CD8-positive, alpha-beta memory T cell (primary cell): ENCODE measurements at regions of chr7 and their contacts with region 1.

Region 1: DNA sequence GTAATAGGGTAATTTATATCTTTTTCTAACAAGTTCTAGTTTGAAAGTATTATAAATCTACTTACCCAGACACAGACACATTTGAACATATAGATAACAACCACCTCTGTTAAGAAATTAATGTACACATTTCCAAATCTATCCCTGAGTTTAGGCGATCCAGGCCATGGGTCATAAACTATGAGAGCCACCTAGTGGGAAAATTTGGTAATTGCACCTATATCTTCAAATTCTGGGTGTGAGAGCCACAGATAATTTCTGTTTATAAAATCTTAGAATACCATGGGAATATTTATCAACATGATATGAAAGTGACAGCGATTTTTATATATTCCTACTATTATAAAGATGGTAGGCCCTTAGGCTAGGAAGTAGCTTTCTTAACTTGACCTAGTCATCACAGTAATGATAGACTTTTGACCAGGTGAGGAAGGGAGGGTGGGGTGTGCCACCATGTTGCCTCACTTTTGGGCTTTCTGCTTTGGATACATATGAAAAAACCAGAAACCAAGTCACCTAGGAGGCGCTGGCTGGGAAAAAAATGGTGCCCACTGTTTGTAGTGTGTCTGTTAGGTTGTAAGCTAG is 8.0 kb upstream of the EPHA1 start:
- DNase-seq: peak in 2 of 5 donors; percentile 49 to 56
- H3K4me3 ChIP-seq: no peak overlapping the region
- H3K4me3 Mint-ChIP-seq: no peak overlapping the region
- H3K27ac ChIP-seq: no peak overlapping the region
- H3K27ac Mint-ChIP-seq: no peak overlapping the region
- H3K4me1 ChIP-seq: no peaks in the 10 kb centered on the region
- H3K4me1 Mint-ChIP-seq: peaks cover 0 to 5% (median 4%) of the 10 kb centered on the region in 3 donors
- H3K27me3 ChIP-seq: no peaks in the 10 kb centered on the region
- H3K27me3 Mint-ChIP-seq: peaks cover 13 to 18% of the 10 kb centered on the region in 2 donors

Region 2: DNA sequence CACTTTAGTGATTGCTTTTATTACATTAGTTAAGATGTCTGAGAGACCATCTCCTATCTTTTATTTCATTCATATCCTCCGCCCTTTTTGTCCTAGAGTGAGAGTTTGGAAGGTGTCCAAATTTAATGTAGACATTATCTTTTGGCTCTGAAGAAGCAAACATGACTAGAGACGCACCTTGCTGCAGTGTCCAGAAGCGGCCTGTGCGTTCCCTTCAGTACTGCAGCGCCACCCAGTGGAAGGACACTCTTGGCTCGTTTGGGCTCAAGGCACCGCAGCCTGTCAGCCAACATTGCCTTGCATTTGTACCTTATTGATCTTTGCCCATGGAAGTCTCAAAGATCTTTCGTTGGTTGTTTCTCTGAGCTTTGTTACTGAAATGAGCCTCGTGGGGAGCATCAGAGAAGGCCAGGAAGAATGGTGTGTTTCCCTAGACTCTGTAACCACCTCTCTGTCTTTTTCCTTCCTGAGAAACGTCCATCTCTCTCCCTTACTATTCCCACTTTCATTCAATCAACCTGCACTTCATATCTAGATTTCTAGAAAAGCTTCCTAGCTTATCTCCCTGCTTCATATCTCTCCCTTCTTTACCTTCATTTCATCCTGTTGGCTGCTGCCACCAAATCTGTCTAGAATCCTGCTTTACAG is 111.1 kb before region 1 on chr7:
- CTCF ChIA-PET with region 1: interaction called, 26 read pairs
- POLR2A ChIA-PET with region 1: no interaction called
- DNase-seq: peak; percentile 40 to 73 (median 44)
- H3K4me3 ChIP-seq: no peak overlapping the region
- H3K4me3 Mint-ChIP-seq: peak overlapping the region in 1 of 7 donors; percentile 6
- H3K27ac ChIP-seq: no peak overlapping the region
- H3K27ac Mint-ChIP-seq: peak overlapping the region in 6 of 8 donors; percentile 1 to 84 (median 38)
- H3K4me1 ChIP-seq: peaks cover 6% of the 10 kb centered on the region
- H3K4me1 Mint-ChIP-seq: peaks cover 25 to 50% (median 33%) of the 10 kb centered on the region in 3 donors
- H3K27me3 ChIP-seq: no peaks in the 10 kb centered on the region
- H3K27me3 Mint-ChIP-seq: no peaks in the 10 kb centered on the region

Region 3: DNA sequence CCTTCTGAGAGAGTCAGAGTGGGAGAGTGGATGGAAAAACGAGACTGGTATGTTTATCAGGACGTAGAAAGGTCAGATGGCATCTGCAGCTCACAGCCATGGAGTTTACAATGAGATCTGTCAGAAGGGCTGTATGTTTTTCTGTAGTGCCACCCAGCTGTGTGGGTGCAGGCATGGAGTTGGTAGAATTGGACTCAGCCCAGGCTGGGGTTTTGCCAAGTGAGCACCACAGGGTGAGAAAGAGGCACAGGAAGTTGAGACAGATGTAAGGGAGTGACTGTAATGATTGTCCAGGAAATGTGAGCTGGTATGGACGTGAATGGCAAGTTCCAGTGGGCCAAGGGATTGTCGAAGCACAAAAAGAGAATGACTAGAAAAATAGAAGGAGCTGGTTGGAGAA is 44.6 kb before region 1 on chr7:
- CTCF ChIA-PET with region 1: interaction called, 10 read pairs
- POLR2A ChIA-PET with region 1: interaction called, 6 read pairs
- DNase-seq: peak in 4 of 5 donors; percentile 19 to 76 (median 50)
- H3K4me3 ChIP-seq: no peak overlapping the region
- H3K4me3 Mint-ChIP-seq: peak overlapping the region in 6 of 7 donors; percentile 5 to 76 (median 41)
- H3K27ac ChIP-seq: no peak overlapping the region
- H3K27ac Mint-ChIP-seq: peak overlapping the region; percentile 15 to 93 (median 87)
- H3K4me1 ChIP-seq: peaks cover 39% of the 10 kb centered on the region
- H3K4me1 Mint-ChIP-seq: peaks cover 56 to 60% (median 58%) of the 10 kb centered on the region in 3 donors
- H3K27me3 ChIP-seq: no peaks in the 10 kb centered on the region
- H3K27me3 Mint-ChIP-seq: no peaks in the 10 kb centered on the region

Region 4: GRCh38 chr7:143391462-143392404 is 24.9 kb before region 1 on chr7:
- CTCF ChIA-PET with region 1: no interaction called
- POLR2A ChIA-PET with region 1: no interaction called
- DNase-seq: no peak
- H3K4me3 ChIP-seq: no peak overlapping the region
- H3K4me3 Mint-ChIP-seq: no peak overlapping the region
- H3K27ac ChIP-seq: no peak overlapping the region
- H3K27ac Mint-ChIP-seq: peak overlapping the region in 4 of 8 donors; percentile 15 to 84 (median 23)
- H3K4me1 ChIP-seq: peaks cover 5% of the 10 kb centered on the region
- H3K4me1 Mint-ChIP-seq: peaks cover 17 to 36% (median 22%) of the 10 kb centered on the region in 3 donors
- H3K27me3 ChIP-seq: no peaks in the 10 kb centered on the region
- H3K27me3 Mint-ChIP-seq: no peaks in the 10 kb centered on the region

Region 5: DNA sequence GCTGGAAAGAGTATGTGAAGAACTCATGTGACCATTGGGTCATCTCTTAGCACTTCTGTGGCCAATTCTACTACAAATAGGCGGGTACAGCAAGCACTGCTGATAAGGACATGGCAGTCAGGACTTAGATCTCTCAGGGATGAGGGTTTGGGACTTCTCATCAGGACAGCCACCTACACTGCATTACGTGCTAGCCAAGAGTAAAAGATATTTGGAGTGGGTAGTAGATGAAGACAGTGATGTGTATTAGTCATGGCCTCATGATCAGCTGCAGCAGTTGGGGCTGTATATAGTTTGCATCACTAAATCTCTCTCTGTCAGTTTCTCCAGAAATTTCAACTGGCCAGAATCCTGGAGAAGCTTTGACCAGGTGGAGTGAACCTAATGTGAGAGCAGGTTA is 35.8 kb after region 1 on chr7:
- CTCF ChIA-PET with region 1: no interaction called
- POLR2A ChIA-PET with region 1: interaction called, 13 read pairs
- DNase-seq: no peak
- H3K4me3 ChIP-seq: no peak overlapping the region
- H3K4me3 Mint-ChIP-seq: no peak overlapping the region
- H3K27ac ChIP-seq: no peak overlapping the region
- H3K27ac Mint-ChIP-seq: no peak overlapping the region
- H3K4me1 ChIP-seq: peaks cover 3% of the 10 kb centered on the region
- H3K4me1 Mint-ChIP-seq: no peaks in the 10 kb centered on the region
- H3K27me3 ChIP-seq: no peaks in the 10 kb centered on the region
- H3K27me3 Mint-ChIP-seq: peaks cover 4 to 9% of the 10 kb centered on the region in 2 donors